Endothelial cell of umbilical vein (primary cell): ENCODE measurements at regions of chr1 and their contacts with region 1.

Region 1: GRCh38 chr1:198681831-198682759 is 43.3 kb downstream of the PTPRC start:
- DNase-seq: peak; percentile 76
- H3K4me3 ChIP-seq: peak overlapping the region in 1 of 3 experiments; percentile 17
- H3K27ac ChIP-seq: peak overlapping the region; percentile 14
- H3K4me1 ChIP-seq: peaks cover 9% of the 10 kb centered on the region
- H3K27me3 ChIP-seq: no peaks in the 10 kb centered on the region
- CTCF ChIP-seq: no peak
- POLR2A ChIP-seq: no peak

Region 2: GRCh38 chr1:197526736-197527371 is 1155.2 kb before region 1 on chr1:
- CTCF ChIA-PET with region 1: interaction called, 29 read pairs
- POLR2A ChIA-PET with region 1: no interaction called
- dilution Hi-C with region 1: no loop called
- intact Hi-C with region 1: no loop called
- DNase-seq: peak; percentile 31
- H3K4me3 ChIP-seq: no peak overlapping the region
- H3K27ac ChIP-seq: no peak overlapping the region
- H3K4me1 ChIP-seq: no peaks in the 10 kb centered on the region
- H3K27me3 ChIP-seq: no peaks in the 10 kb centered on the region
- CTCF ChIP-seq: peak; percentile 16 to 18
- POLR2A ChIP-seq: no peak

Region 3: DNA sequence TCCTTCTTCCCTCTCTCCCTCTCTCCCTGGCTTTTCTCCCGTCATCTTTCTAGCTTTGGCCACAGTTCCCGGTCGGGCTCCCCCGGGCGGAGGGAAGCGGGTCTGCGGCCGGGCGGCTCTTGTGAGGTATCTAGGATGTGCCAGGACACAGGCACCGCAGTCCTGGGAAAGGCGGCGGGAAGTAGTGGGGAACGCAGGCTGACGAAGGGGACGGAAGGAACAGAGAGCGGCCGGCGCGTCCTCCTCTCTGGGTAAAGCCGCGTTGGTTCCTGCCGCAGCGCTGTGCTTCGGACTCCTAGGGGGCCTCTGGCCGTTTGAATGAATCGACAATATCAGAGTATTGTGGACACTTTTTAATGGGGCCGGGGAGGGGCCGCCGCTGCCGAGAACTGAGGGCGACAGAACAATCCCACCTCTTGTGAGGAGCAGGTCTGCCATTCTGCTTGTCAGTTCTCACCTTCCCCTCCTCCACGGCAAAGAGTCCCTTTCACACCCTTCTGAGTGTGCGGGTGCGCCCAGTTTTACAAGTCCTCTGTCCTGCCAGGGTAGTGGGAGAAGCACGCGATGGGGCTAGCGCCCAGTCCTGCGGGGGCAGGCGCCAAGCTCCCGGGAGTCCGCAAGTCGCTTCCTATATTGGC is 766.1 kb before region 1 on chr1:
- CTCF ChIA-PET with region 1: interaction called, 9 read pairs
- POLR2A ChIA-PET with region 1: no interaction called
- dilution Hi-C with region 1: no loop called
- intact Hi-C with region 1: loop called (anchors 5 kb)
- DNase-seq: peak; percentile 55
- H3K4me3 ChIP-seq: peak overlapping the region in 2 of 3 experiments; percentile 13 to 15
- H3K27ac ChIP-seq: no peak overlapping the region
- H3K4me1 ChIP-seq: peaks cover 44% of the 10 kb centered on the region
- H3K27me3 ChIP-seq: peaks cover 95 to 99% of the 10 kb centered on the region in 2 experiments
- CTCF ChIP-seq: peak; percentile 54 to 78
- POLR2A ChIP-seq: no peak

Region 4: DNA sequence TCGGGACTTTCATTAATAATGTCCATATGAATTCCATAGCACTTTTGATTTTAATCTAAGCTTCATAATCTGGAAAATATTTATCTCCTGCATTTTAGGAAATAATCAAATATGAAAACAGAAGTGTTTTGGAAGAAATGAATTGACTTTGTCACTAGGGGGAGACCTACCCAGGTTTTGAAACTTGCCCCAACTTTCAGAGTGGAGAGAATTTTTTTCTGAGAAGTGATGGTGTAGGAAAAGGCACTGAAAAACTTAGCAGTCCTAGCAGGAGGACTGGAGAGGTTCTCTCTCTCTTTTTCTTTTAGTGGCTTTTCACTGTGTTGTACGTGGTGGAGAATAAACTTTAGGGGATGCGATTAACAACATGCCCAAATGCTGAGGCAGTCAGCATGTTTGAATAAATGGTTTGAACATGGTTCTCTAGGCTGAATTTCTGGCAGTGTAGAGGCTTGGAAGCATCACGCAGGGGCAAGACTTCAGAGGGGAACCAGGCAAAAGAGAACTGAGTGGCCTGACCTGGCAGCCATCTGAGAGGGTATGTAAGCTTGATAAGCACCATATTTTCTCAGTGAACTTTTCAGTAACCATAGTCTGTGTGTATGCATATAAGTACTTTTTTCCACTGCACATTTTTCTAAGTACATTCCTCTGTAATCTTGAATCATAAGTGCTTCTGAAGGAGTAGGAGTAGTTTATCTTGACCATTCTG is 593.6 kb before region 1 on chr1:
- CTCF ChIA-PET with region 1: interaction called, 16 read pairs
- POLR2A ChIA-PET with region 1: no interaction called
- dilution Hi-C with region 1: no loop called
- intact Hi-C with region 1: loop called (anchors 1 kb)
- DNase-seq: peak; percentile 69
- H3K4me3 ChIP-seq: no peak overlapping the region
- H3K27ac ChIP-seq: peak overlapping the region; percentile 21
- H3K4me1 ChIP-seq: peaks cover 4% of the 10 kb centered on the region
- H3K27me3 ChIP-seq: no peaks in the 10 kb centered on the region
- CTCF ChIP-seq: peak; percentile 31 to 48
- POLR2A ChIP-seq: no peak

Region 5: GRCh38 chr1:198118134-198118533 is 564.0 kb before region 1 on chr1:
- CTCF ChIA-PET with region 1: no interaction called
- POLR2A ChIA-PET with region 1: no interaction called
- dilution Hi-C with region 1: no loop called
- intact Hi-C with region 1: no loop called
- DNase-seq: peak; percentile 24
- H3K4me3 ChIP-seq: no peak overlapping the region
- H3K27ac ChIP-seq: no peak overlapping the region
- H3K4me1 ChIP-seq: peaks cover 29% of the 10 kb centered on the region
- H3K27me3 ChIP-seq: no peaks in the 10 kb centered on the region
- CTCF ChIP-seq: no peak
- POLR2A ChIP-seq: no peak

Region 6: GRCh38 chr1:198359024-198359653 is 323.0 kb before region 1 on chr1:
- CTCF ChIA-PET with region 1: interaction called, 10 read pairs
- POLR2A ChIA-PET with region 1: no interaction called
- dilution Hi-C with region 1: no loop called
- intact Hi-C with region 1: loop called (anchors 10 kb)
- DNase-seq: peak; percentile 32
- H3K4me3 ChIP-seq: no peak overlapping the region
- H3K27ac ChIP-seq: no peak overlapping the region
- H3K4me1 ChIP-seq: no peaks in the 10 kb centered on the region
- H3K27me3 ChIP-seq: no peaks in the 10 kb centered on the region
- CTCF ChIP-seq: peak; percentile 27 to 36
- POLR2A ChIP-seq: no peak

Region 7: GRCh38 chr1:198669023-198669698 is 12.9 kb before region 1 on chr1:
- CTCF ChIA-PET with region 1: interaction called, 10 read pairs
- POLR2A ChIA-PET with region 1: interaction called, 3 read pairs
- dilution Hi-C with region 1: no loop called
- intact Hi-C with region 1: no loop called
- DNase-seq: peak; percentile 78
- H3K4me3 ChIP-seq: no peak overlapping the region
- H3K27ac ChIP-seq: peak overlapping the region; percentile 80
- H3K4me1 ChIP-seq: peaks cover 16% of the 10 kb centered on the region
- H3K27me3 ChIP-seq: no peaks in the 10 kb centered on the region
- CTCF ChIP-seq: no peak
- POLR2A ChIP-seq: peak; percentile 68

Region 8: DNA sequence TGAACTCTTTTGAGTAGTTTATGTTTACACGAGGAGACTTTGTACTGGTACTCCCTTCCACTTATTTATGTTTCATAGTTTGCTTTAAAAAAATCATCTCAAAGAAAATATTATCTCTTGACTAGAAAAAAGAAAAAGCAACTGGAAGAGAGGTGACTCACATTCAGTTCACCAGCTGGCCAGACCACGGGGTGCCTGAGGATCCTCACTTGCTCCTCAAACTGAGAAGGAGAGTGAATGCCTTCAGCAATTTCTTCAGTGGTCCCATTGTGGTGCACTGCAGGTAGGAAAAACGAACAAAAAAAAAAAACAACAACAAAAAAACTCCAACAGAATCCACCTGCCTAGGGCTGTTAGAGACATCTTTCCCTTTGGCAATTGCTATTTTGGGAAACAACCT is 59.6 kb after region 1 on chr1:
- CTCF ChIA-PET with region 1: no interaction called
- POLR2A ChIA-PET with region 1: no interaction called
- dilution Hi-C with region 1: no loop called
- intact Hi-C with region 1: no loop called
- DNase-seq: no peak
- H3K4me3 ChIP-seq: no peak overlapping the region
- H3K27ac ChIP-seq: no peak overlapping the region
- H3K4me1 ChIP-seq: no peaks in the 10 kb centered on the region
- H3K27me3 ChIP-seq: no peaks in the 10 kb centered on the region
- CTCF ChIP-seq: no peak
- POLR2A ChIP-seq: no peak

Region 9: GRCh38 chr1:198860371-198860770 is 178.3 kb after region 1 on chr1:
- CTCF ChIA-PET with region 1: no interaction called
- POLR2A ChIA-PET with region 1: no interaction called
- dilution Hi-C with region 1: no loop called
- intact Hi-C with region 1: no loop called
- DNase-seq: no peak
- H3K4me3 ChIP-seq: no peak overlapping the region
- H3K27ac ChIP-seq: no peak overlapping the region
- H3K4me1 ChIP-seq: no peaks in the 10 kb centered on the region
- H3K27me3 ChIP-seq: no peaks in the 10 kb centered on the region
- CTCF ChIP-seq: no peak
- POLR2A ChIP-seq: no peak